K562 (cell line): ENCODE measurements at regions of chr2 and their contacts with region 1.

Region 1: GRCh38 chr2:159807183-159808031 is 9.4 kb upstream of the CD302 start:
- DNase-seq: peak; percentile 66 to 75 (median 69)
- ATAC-seq: peak; percentile 94
- H3K4me3 ChIP-seq: no peak overlapping the region
- H3K27ac ChIP-seq: no peak overlapping the region
- H3K4me1 ChIP-seq: no peaks in the 10 kb centered on the region
- H3K27me3 ChIP-seq: peaks cover 4 to 6% of the 10 kb centered on the region in 2 experiments; a peak in 2 of 5 replicates
- CTCF ChIP-seq: peak; percentile 82 to 93 (median 89)
- EP300 ChIP-seq: no peak
- POLR2A ChIP-seq: no peak
- RAD21 ChIP-seq: peak; percentile 71 to 85

Region 2: DNA sequence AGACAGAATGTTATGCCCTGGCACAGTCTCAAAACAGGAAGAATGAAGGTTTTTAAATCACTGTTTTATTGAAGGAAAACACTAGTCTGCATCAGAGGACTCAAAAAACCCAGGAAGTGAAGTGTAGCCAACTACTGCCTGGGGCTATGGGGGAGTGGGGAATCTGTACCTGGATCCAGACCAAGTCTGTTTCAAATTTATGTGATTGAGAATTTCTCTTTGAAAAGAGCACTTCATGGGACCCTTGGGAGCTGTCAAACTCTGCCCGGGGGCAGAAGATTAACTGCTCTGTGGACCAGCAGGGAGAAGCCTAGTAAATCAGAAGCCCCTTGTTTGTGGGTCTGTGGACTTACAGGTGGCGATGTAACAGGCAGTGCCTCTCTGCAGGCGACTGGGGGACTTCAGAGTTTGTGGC is 884.2 kb before region 1 on chr2:
- CTCF ChIA-PET with region 1: no interaction called
- POLR2A ChIA-PET with region 1: no interaction called
- in situ Hi-C with region 1: loop called (anchors 25 kb)
- intact Hi-C with region 1: no loop called
- DNase-seq: no peak
- ATAC-seq: no peak
- H3K4me3 ChIP-seq: no peak overlapping the region
- H3K27ac ChIP-seq: no peak overlapping the region
- H3K4me1 ChIP-seq: peaks cover 0 to 4% of the 10 kb centered on the region in 2 experiments; a peak in 1 of 5 replicates
- H3K27me3 ChIP-seq: peaks cover 0 to 8% of the 10 kb centered on the region in 2 experiments; a peak in 1 of 5 replicates
- CTCF ChIP-seq: no peak
- EP300 ChIP-seq: no peak
- POLR2A ChIP-seq: no peak
- RAD21 ChIP-seq: no peak

Region 3: GRCh38 chr2:159175182-159175581 is 632.2 kb before region 1 on chr2:
- CTCF ChIA-PET with region 1: no interaction called
- POLR2A ChIA-PET with region 1: no interaction called
- in situ Hi-C with region 1: no loop called
- intact Hi-C with region 1: loop called (anchors 5 kb)
- DNase-seq: peak; percentile 37 to 74 (median 53)
- ATAC-seq: peak; percentile 96
- H3K4me3 ChIP-seq: no peak overlapping the region
- H3K27ac ChIP-seq: no peak overlapping the region
- H3K4me1 ChIP-seq: no peaks in the 10 kb centered on the region; a peak in 1 of 5 replicates
- H3K27me3 ChIP-seq: peaks cover 31 to 54% of the 10 kb centered on the region in 2 experiments
- CTCF ChIP-seq: peak; percentile 54 to 72 (median 67); a peak in 5 of 6 replicates
- EP300 ChIP-seq: no peak
- POLR2A ChIP-seq: no peak
- RAD21 ChIP-seq: peak; percentile 59 to 81

Region 4: GRCh38 chr2:159209341-159210306 is 597.8 kb before region 1 on chr2:
- CTCF ChIA-PET with region 1: no interaction called
- POLR2A ChIA-PET with region 1: interaction called, 4 read pairs
- in situ Hi-C with region 1: no loop called
- intact Hi-C with region 1: loop called (anchors 5 kb)
- DNase-seq: no peak
- ATAC-seq: no peak
- H3K4me3 ChIP-seq: no peak overlapping the region
- H3K27ac ChIP-seq: no peak overlapping the region
- H3K4me1 ChIP-seq: no peaks in the 10 kb centered on the region
- H3K27me3 ChIP-seq: peaks cover 34 to 60% of the 10 kb centered on the region in 2 experiments
- CTCF ChIP-seq: no peak
- EP300 ChIP-seq: no peak
- POLR2A ChIP-seq: no peak
- RAD21 ChIP-seq: no peak

Region 5: GRCh38 chr2:159557451-159558034 is 249.9 kb before region 1 on chr2:
- CTCF ChIA-PET with region 1: interaction called, 4 read pairs
- POLR2A ChIA-PET with region 1: no interaction called
- in situ Hi-C with region 1: no loop called
- intact Hi-C with region 1: loop called (anchors 5 kb)
- DNase-seq: peak in 1 of 4 experiments; percentile 39
- ATAC-seq: peak; percentile 85
- H3K4me3 ChIP-seq: no peak overlapping the region
- H3K27ac ChIP-seq: no peak overlapping the region
- H3K4me1 ChIP-seq: peaks cover 0 to 6% of the 10 kb centered on the region in 2 experiments; a peak in 1 of 5 replicates
- H3K27me3 ChIP-seq: no peaks in the 10 kb centered on the region
- CTCF ChIP-seq: peak; percentile 47 to 63 (median 56); a peak in 5 of 6 replicates
- EP300 ChIP-seq: no peak
- POLR2A ChIP-seq: no peak
- RAD21 ChIP-seq: peak; percentile 31 to 79

Region 6: GRCh38 chr2:159818940-159819339 is 11.5 kb after region 1 on chr2:
- CTCF ChIA-PET with region 1: no interaction called
- POLR2A ChIA-PET with region 1: no interaction called
- in situ Hi-C with region 1: no loop called
- intact Hi-C with region 1: no loop called
- DNase-seq: no peak
- ATAC-seq: no peak
- H3K4me3 ChIP-seq: no peak overlapping the region
- H3K27ac ChIP-seq: no peak overlapping the region
- H3K4me1 ChIP-seq: no peaks in the 10 kb centered on the region
- H3K27me3 ChIP-seq: peaks cover 4 to 11% of the 10 kb centered on the region in 2 experiments; a peak in 3 of 5 replicates
- CTCF ChIP-seq: no peak
- EP300 ChIP-seq: no peak
- POLR2A ChIP-seq: no peak
- RAD21 ChIP-seq: no peak

Region 7: DNA sequence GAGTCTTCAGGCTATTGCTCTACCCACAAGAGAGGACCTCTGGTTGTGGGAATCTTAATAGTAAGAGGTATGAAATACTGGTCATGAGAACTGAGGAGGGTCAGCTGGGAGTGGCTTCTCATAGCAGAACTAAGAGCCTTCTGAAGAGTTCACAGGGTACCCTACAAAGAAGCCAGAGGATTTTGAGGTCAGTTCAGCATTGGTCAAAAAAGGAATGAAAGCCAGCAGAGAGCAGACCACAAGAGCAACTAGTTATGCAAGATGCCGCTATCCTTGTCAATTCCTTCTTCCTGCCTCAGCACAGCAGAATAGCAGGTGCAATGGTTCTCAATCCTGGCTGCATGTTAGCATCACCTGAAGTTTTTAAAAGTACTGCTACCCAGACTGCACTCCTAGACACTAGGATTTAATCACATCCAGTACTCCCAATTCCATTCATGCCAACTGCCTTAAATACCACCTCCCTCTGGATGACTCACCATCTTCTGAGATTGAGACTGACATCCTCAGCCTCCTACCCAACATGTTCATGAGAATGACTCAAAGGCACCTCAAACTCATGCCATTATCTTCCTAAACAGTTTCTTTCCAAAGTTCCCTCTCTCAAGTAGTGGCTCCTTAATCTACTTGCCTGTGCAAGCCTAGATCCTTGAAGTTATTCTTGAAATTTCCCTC is 767.2 kb after region 1 on chr2:
- CTCF ChIA-PET with region 1: no interaction called
- POLR2A ChIA-PET with region 1: no interaction called
- in situ Hi-C with region 1: no loop called
- intact Hi-C with region 1: no loop called
- DNase-seq: no peak
- ATAC-seq: no peak
- H3K4me3 ChIP-seq: no peak overlapping the region
- H3K27ac ChIP-seq: no peak overlapping the region
- H3K4me1 ChIP-seq: no peaks in the 10 kb centered on the region
- H3K27me3 ChIP-seq: no peaks in the 10 kb centered on the region
- CTCF ChIP-seq: no peak
- EP300 ChIP-seq: no peak
- POLR2A ChIP-seq: no peak
- RAD21 ChIP-seq: no peak